Activated naive CD8-positive, alpha-beta T cell treated with anti-CD3 and anti-CD28 coated beads, Interleukin-2, amount 10 ng/mL, durations not matched to agents 7 days and 5 days (primary cell): ENCODE measurements at regions of chr12 and their contacts with region 1.

Region 1: GRCh38 chr12:93243689-93244513 is 133.8 kb upstream of the NUDT4 start:
- DNase-seq: no peak
- ATAC-seq: peak; percentile 57
- H3K4me3 Mint-ChIP-seq: peak overlapping the region; percentile 83
- H3K27ac Mint-ChIP-seq: peak overlapping the region; percentile 96
- H3K4me1 Mint-ChIP-seq: peaks cover 38% of the 10 kb centered on the region
- H3K27me3 Mint-ChIP-seq: no peaks in the 10 kb centered on the region

Region 2: GRCh38 chr12:93197067-93197593 is 46.8 kb before region 1 on chr12:
- POLR2A ChIA-PET with region 1: no interaction called
- DNase-seq: no peak
- ATAC-seq: no peak
- H3K4me3 Mint-ChIP-seq: no peak overlapping the region
- H3K27ac Mint-ChIP-seq: no peak overlapping the region
- H3K4me1 Mint-ChIP-seq: no peaks in the 10 kb centered on the region
- H3K27me3 Mint-ChIP-seq: peaks cover 9% of the 10 kb centered on the region

Region 3: DNA sequence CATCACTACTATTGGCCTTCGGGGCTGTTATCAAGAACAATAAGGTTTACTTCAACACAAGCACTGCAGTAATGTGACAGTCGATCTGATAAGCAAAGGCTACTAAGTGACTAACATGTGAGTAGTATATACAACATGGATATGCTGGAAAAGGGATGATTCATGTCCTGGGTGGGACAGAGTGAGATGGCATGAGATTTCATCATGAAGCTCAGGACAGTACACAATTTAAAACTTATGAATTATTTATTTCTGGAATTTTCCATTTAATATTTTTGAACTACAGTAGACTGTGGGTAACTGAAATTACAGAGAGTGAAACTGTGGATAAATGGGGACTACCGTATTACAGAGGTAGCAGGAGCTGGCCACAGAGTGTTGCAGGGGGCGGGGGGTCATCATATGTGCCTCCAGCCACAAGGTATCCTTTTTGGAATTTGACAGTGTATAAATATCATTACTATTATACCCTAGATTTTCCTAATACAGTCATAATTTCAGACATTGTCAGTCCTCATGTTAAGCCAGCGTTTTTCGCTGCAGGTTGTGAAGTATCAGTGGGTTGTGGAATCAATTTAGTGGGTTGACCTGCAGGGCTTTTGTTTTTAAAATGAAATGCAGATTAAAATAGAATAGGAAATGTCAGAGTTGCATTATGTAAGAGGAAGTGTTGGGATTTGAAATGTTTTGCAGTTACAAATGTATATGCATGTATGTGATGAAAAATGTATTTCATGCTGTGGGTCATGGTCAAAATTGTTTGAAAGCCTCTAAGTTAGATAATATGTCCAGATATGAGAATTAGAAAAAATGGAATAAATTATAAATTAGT is 14.2 kb before region 1 on chr12:
- POLR2A ChIA-PET with region 1: no interaction called
- DNase-seq: no peak
- ATAC-seq: no peak
- H3K4me3 Mint-ChIP-seq: no peak overlapping the region
- H3K27ac Mint-ChIP-seq: no peak overlapping the region
- H3K4me1 Mint-ChIP-seq: peaks cover 3% of the 10 kb centered on the region
- H3K27me3 Mint-ChIP-seq: no peaks in the 10 kb centered on the region

Region 4: GRCh38 chr12:93363841-93364297 is 120.0 kb after region 1 on chr12:
- POLR2A ChIA-PET with region 1: interaction called, 16 read pairs
- DNase-seq: no peak
- ATAC-seq: peak; percentile 92
- H3K4me3 Mint-ChIP-seq: peak overlapping the region; percentile 80
- H3K27ac Mint-ChIP-seq: peak overlapping the region; percentile 87
- H3K4me1 Mint-ChIP-seq: peaks cover 22% of the 10 kb centered on the region
- H3K27me3 Mint-ChIP-seq: no peaks in the 10 kb centered on the region